ENCODE measurements at regions of chr6 and their contacts with region 1.

Region 1: DNA sequence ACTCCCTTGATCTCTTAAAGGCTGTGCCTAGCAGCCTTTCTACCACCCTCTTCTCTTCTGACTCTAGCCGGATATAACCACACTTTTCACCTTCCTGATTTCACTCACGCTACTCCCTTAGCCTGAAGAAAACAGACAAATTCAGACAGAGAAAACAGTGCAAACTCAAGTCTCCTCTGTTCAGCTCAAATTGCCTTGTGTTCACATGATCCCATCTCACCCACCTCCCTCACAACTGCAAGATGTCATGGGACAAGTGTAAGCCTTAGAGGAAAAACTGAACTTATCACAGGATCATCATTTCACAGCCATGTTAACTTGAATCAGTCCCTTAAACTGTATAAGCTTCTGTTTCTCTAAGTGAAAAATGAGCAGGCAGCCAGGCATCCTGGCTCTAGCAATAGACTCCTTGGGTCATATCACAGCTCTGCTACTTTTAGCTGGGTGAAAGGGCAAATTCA is 66.5 kb upstream of the TENT5A start:
- DNase-seq: no peak

Region 2: DNA sequence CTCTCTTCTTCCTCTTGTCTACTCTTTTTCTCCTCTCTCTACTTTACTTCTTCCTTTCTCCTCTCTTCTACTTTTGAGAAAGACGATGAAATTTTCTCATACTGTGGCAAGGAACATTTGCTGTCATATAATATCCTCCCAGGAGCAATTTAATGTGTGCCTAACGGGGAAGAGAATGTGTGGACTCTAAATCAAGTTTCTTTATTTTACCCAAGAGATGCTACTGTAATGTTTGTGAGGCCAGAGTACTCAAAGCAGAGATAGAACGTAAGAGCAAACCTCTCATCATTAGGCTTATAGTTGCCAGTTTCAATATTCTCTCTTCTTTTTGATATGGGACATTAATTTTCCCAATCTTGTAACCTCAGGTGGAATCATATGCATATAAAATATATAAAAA is 911.1 kb before region 1 on chr6:
- intact Hi-C with region 1: loop called in 1 of 2 experiments (anchors 5 kb)
- DNase-seq: no peak

Region 3: DNA sequence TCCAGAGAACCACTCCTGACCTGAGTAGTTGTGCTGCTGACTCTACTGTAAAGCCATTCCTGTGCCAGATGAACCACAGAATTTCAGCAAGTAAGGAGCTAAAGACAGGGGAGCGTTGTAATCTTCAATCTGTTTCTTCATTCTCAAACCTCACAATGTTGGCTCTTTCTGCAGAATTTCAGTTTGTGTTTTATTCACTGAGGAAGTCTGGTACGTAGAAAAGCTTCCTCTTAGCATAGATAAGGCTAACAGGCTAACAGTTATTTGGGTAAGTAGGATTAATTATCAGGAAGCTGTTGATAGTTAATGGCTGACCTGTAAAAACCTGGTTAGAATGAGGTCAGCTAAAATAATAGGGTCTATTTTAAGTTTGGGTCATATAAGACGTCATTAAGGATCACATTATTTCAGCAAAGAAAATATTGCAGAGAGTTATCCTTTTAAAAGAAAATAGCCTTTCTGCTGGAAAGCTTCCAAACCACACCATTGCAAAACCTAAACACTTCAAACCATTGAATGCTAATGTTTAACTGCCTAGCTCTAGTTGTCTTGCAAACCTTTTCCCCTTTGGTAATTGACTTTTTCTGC is 52.4 kb before region 1 on chr6:
- intact Hi-C with region 1: no loop called
- DNase-seq: no peak

Region 4: DNA sequence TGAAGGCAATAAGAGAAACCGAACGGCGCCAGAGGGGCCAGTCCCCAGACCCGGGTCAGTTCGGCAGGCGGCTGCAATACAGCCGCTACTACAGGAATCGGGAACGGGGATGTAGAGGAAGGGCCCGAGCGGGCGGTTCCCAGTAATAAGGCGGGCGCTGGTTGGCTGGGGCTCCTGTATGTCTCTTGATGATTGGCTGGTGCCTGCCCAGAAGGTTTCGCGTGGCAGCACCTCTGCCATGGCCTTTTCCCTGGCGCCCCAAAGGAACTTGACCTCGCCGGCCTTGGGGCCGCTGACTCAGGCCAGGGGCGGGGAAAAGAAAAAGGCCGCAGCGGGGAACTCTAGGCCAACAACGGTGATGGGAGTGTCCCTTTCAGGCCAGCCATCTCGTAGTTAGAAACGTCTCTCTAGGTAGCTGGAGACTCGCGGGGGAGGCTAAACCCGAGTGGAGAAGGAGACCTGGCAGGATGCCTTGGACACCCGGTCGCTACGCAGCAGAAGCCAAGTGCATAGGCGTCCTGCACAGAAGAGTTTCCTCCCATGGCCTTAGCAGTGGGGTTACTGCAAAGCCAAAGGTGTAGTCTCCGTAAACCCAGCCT is 428.8 kb after region 1 on chr6 and contains the start of gene IBTK:
- intact Hi-C with region 1: no loop called
- DNase-seq: peak; percentile 98
- total RNA-seq, gene IBTK: 32.2 to 35.6 TPM